ENCODE measurements at regions of chr17 and their contacts with region 1.

Region 1: DNA sequence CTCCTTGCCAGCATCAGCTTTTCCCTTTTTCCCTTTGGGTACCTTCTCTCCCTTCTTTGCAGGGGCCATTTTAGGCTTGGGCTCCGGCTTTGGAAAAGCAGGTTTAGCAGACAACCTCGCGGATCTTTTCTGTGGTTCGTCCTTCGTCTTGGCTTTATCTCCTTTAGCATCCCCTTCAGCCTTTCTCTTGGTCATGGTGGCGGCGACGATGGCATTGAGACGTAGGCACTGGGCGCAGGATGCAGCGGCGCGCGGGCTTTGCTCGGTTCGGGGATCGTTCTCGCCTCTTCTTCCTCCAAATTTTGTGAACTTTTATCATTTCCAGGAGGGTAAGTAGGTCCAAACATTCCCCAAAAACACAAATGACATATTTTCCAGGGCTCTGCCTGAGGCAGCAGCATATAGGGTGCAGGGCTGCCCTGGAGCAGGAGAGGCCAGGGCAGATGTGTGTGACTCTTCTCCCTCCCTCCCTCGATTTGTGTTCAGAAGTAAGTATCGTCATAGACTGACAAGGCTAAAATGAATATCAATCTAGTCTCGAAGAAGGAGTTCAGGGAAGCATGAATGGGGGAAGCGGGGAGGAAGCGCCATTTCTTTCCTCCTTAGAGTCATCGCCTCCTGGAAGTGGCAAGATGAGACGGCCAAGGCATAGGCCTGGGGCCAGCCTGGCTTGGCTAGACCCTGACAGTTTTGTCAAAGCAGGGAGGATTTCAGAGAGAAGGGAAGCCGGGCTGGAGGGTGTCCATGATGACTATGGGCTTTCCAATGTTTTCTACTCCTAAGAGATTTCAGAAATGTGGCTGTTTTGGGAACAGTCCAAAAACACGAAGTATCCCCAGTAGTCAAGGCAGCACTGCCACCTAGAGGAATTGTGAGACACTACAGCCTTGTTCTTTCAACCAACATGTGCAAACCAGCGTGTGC is 13.2 kb downstream of the CHCT1 start:
- DNase-seq: peak; percentile 56
- H3K4me3 ChIP-seq: peak overlapping the region; percentile 31
- H3K27ac ChIP-seq: peak overlapping the region; percentile 45
- H3K4me1 ChIP-seq: peaks cover 5% of the 10 kb centered on the region
- H3K27me3 ChIP-seq: peaks cover 15% of the 10 kb centered on the region
- CTCF ChIP-seq: peak; percentile 96

Region 2: DNA sequence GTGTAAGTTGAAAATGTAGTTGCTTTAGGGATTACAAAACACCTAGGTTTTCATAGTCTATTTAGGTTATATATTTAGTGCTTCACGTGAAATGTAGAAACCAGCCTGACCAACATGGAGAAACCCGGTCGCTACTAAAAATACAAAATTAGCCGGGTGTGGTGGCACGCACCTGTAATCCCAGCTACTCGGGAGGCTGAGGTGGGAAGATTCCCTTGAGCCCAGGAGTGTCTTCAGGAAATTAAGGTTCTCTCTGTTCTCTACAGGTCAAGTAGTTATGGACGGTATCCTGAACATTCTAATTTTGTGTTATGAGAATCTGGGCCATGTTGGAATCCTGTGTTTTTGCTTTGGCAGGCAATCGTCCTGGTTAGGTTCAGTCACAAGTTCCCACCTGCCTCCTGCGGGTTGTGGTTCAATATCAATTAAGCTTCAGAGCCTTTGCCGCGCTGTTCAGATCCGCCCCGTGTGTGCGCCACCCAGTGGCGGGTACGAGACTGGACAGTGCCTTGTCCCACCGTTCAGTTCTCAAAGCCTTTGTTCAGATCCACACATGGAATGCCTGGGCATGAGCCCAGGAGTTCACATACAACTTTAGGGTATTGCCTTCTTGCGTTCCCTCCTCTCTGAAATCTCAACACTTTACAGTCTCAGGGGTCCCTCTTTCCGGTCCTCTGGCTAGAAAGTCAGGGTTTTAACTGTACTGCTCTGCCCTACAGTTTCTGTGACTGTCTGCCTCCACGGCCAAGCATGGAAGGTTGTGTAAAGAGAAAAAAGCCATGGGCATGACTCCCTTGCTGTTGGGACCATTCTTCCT is 398.5 kb before region 1 on chr17:
- intact Hi-C with region 1: loop called (anchors 10 kb)
- DNase-seq: peak; percentile 50
- H3K4me3 ChIP-seq: no peak overlapping the region
- H3K27ac ChIP-seq: no peak overlapping the region
- H3K4me1 ChIP-seq: peaks cover 4% of the 10 kb centered on the region
- H3K27me3 ChIP-seq: peaks cover 10% of the 10 kb centered on the region
- CTCF ChIP-seq: peak; percentile 92

Region 3: DNA sequence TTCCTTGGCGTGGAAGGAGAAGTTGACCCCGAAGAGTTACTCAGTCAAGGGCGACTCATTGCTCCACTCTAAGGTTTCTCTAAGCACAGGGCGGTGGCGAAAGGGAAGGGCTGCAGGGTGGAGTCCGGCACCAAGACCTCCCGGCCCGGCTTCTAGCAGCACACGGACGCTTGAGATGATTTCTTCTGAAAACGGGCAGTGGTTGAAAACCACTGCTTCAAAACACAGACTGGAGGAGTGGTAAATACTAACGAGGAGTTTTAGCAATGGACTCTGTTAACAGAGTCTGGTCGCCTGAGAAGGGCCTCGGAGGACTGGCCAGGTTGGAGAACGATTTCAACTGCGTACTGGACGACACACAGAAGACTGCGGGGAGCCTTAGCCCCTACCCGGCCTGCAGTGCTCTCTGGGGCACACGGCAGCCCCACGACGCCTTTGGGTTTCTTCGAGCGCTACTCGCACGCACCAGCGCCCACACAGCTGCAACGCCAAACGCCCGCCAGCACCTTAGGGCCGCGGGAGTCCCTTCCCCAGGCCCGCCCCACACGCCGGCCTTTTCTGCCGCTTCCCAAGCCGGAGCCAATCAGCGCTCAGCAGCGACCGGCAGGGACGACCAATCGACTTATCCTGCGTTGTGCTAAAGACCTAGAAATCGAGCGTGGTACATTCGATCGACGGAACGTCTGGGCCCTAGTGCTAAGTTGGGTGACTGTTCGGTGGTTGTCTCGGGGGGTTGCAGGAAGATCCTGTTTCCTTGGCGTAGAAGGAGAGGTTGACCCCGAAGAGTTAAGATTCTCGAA is 300.2 kb before region 1 on chr17:
- intact Hi-C with region 1: loop called (anchors 10 kb)
- DNase-seq: peak; percentile 89
- H3K4me3 ChIP-seq: peak overlapping the region; percentile 95
- H3K27ac ChIP-seq: peak overlapping the region; percentile 93
- H3K4me1 ChIP-seq: peaks cover 48% of the 10 kb centered on the region
- H3K27me3 ChIP-seq: peaks cover 33% of the 10 kb centered on the region
- CTCF ChIP-seq: no peak

Region 4: DNA sequence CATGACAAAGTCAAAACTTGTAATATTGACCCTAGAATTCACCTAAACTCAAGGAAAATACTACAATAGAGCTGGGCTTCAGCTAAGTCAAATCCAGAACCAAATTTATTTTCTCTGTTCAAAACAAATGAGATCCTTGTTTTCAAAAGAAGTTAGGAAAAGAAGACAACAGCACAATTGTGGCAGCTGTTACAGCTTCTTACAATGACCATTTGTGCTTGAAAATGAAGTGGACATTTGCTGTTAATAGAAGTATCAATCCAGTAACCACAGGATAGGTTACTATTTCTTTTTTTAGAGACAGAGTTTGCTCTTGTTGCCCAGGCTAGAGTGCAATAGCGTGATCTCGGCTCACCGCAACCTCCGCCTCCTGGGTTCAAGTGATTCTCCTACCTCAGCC is 46.1 kb after region 1 on chr17:
- intact Hi-C with region 1: no loop called
- DNase-seq: no peak
- H3K4me3 ChIP-seq: no peak overlapping the region
- H3K27ac ChIP-seq: no peak overlapping the region
- H3K4me1 ChIP-seq: no peaks in the 10 kb centered on the region
- H3K27me3 ChIP-seq: no peaks in the 10 kb centered on the region
- CTCF ChIP-seq: no peak

Measured in left ventricle myocardium inferior (tissue), 1 donor.